ENCODE measurements at regions of chr11 and their contacts with region 1.

Region 1: DNA sequence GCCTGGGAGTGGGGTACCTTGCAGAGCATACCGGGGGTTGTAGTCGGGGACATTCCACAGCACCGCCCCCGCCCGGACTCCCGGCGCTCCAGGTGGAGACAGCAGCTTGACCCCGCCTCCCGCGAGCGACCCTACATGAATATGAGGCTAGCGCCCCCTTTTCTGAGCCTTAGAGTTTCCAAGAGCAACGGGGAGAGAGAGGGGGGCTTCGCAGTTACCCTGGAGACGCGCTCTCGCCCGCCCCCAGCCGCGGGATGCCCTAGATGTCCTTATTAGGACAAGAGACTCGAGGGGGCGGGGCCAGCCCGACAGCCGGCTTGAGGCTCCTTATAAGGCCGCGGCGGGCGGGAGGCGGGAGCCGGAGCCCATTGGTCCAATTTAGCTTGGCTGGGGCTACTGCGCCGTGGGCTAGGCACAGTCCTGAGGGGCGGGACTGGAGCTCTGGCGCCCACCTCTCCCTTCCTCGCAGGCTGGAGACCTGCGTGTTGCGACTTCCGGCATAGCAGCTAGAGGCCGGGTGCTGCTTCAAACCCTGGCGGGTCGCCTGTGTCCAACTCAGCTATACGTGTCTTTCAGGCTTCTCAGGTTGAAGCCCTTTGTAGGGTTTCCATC is 927 bp upstream of the MUS81 start:
- DNase-seq: peak; percentile 99
- H3K4me3 ChIP-seq: peak overlapping the region; percentile 99
- H3K27ac ChIP-seq: peak overlapping the region; percentile 93
- H3K4me1 ChIP-seq: peaks cover 31% of the 10 kb centered on the region
- CTCF ChIP-seq: 0 out of 2 replicates have a peak, but pooled peaks have one; percentile 26

Region 2: GRCh38 chr11:65615229-65615941 is 243.9 kb before region 1 on chr11 and contains the start of gene PCNX3:
- CTCF ChIA-PET with region 1: no interaction called
- POLR2A ChIA-PET with region 1: interaction called, 3 read pairs
- intact Hi-C with region 1: loop called (anchors 1 kb)
- DNase-seq: peak; percentile 100
- H3K4me3 ChIP-seq: peak within 1 kb of the TSS; percentile 97
- H3K27ac ChIP-seq: peak within 1 kb of the TSS; percentile 75
- H3K4me1 ChIP-seq: peaks cover 48% of the 10 kb centered on the region
- CTCF ChIP-seq: no peak
- total RNA-seq, gene PCNX3: 29.9 and 36.2 TPM in 2 replicates

Region 3: GRCh38 chr11:65662799-65663638 is 196.3 kb before region 1 on chr11 and contains the start of gene RELA:
- CTCF ChIA-PET with region 1: no interaction called
- POLR2A ChIA-PET with region 1: no interaction called
- intact Hi-C with region 1: loop called (anchors 1 kb)
- DNase-seq: peak; percentile 96
- H3K4me3 ChIP-seq: peak within 1 kb of the TSS; percentile 100
- H3K27ac ChIP-seq: peak within 1 kb of the TSS; percentile 90
- H3K4me1 ChIP-seq: peaks cover 15% of the 10 kb centered on the region
- CTCF ChIP-seq: no peak
- total RNA-seq, gene RELA: 40.4 and 48.0 TPM in 2 replicates

Region 4: GRCh38 chr11:65743928-65744698 is 115.2 kb before region 1 on chr11:
- CTCF ChIA-PET with region 1: no interaction called
- POLR2A ChIA-PET with region 1: no interaction called
- intact Hi-C with region 1: no loop called
- DNase-seq: peak; percentile 6
- H3K4me3 ChIP-seq: no peak overlapping the region
- H3K27ac ChIP-seq: no peak overlapping the region
- H3K4me1 ChIP-seq: no peaks in the 10 kb centered on the region
- CTCF ChIP-seq: no peak

Region 5: GRCh38 chr11:65888163-65888814 is 29.0 kb after region 1 on chr11 and contains the start of gene FIBP:
- CTCF ChIA-PET with region 1: interaction called, 24 read pairs
- POLR2A ChIA-PET with region 1: interaction called, 59 read pairs
- intact Hi-C with region 1: loop called (anchors 1 kb)
- DNase-seq: peak; percentile 97
- H3K4me3 ChIP-seq: peak within 1 kb of the TSS; percentile 93
- H3K27ac ChIP-seq: peak within 1 kb of the TSS; percentile 80
- H3K4me1 ChIP-seq: peaks cover 64% of the 10 kb centered on the region
- CTCF ChIP-seq: peak; percentile 81
- total RNA-seq, gene FIBP: 133 and 184 TPM in 2 replicates

Region 6: DNA sequence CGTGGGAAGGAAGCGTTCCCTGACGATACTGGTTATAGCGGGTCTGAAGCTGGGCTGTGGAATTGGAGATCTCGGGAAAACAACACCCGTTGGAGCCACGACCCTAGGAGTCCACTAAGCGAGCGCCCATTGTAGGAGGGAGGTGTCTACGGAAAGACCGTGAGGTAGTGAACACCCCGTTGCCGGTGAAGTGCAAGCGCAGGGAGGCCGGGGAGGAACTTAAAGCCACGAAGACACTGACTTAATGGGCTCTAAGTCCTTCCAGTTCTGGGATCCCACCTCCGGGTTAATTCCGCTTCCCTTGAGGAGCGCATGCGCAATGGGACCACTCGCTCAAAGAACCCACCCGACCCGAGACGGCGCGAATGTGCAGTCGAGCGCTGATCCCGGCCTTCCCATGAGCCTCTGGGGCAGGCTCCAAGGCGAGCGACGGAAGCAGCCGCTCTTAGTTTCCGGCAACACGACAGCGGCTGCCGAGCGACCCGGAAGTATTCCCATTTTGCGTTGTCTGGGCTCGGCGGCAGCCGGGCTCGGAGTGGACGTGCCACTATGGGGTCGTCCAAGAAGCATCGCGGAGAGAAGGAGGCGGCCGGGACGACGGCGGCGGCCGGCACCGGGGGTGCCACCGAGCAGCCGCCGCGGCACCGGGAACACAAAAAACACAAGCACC is 102.1 kb after region 1 on chr11 and contains the start of gene SART1:
- CTCF ChIA-PET with region 1: no interaction called
- POLR2A ChIA-PET with region 1: no interaction called
- intact Hi-C with region 1: loop called (anchors 1 kb)
- DNase-seq: peak; percentile 99
- H3K4me3 ChIP-seq: peak within 1 kb of the TSS; percentile 89
- H3K27ac ChIP-seq: peak within 1 kb of the TSS; percentile 69
- H3K4me1 ChIP-seq: peaks cover 26% of the 10 kb centered on the region
- CTCF ChIP-seq: no peak
- total RNA-seq, gene SART1: 50.4 and 93.8 TPM in 2 replicates

Region 7: GRCh38 chr11:66001942-66002647 is 142.8 kb after region 1 on chr11 and contains the starts of genes BANF1 and EIF1AD:
- CTCF ChIA-PET with region 1: no interaction called
- POLR2A ChIA-PET with region 1: no interaction called
- intact Hi-C with region 1: loop called (anchors 1 kb)
- DNase-seq: peak; percentile 98
- H3K4me3 ChIP-seq: peak within 1 kb of the TSS; percentile 89
- H3K27ac ChIP-seq: peak within 1 kb of the TSS; percentile 93
- H3K4me1 ChIP-seq: peaks cover 33% of the 10 kb centered on the region
- CTCF ChIP-seq: no peak
- total RNA-seq, gene BANF1: 70.6 and 82.2 TPM in 2 replicates
- total RNA-seq, gene EIF1AD: 51.1 and 65.9 TPM in 2 replicates

Region 8: DNA sequence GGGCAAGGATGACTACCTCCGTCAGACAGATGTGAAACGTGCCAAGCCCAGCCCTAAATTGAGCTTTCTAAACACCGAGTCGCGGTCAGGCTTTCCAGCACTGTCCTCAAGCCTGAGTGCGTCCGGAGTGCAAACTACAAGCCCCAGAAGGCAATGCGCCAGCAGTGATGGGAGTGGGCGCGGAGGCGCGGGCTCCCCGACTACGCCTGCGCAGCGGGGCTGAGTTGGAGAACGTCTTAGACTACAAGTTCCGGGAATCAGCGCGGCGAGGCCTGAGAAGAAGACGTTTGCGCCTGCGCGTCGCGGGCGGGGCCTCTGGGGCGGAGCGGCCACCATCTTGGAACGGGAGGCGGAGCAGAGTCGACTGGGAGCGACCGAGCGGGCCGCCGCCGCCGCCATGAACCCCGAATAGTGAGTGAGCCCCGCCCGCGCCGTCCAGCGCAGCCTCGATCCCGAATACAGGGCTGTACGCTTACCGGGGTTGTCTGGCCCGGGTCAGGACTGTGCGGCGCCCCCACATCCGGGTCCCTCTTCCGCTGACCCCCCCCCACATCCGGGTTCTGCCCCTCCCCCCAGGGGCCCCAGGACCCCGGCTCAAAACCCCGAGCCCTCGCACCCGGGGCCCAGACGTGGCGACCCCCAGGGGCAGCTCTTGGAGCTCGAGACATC is 409.1 kb after region 1 on chr11 and contains the start of gene RAB1B:
- CTCF ChIA-PET with region 1: no interaction called
- POLR2A ChIA-PET with region 1: no interaction called
- intact Hi-C with region 1: loop called (anchors 5 kb)
- DNase-seq: peak; percentile 100
- H3K4me3 ChIP-seq: peak within 1 kb of the TSS; percentile 100
- H3K27ac ChIP-seq: peak within 1 kb of the TSS; percentile 84
- H3K4me1 ChIP-seq: peaks cover 24% of the 10 kb centered on the region
- CTCF ChIP-seq: no peak
- total RNA-seq, gene RAB1B: 69.2 and 77.7 TPM in 2 replicates